ENCODE measurements at regions of chr1 and their contacts with region 1.

Region 1: DNA sequence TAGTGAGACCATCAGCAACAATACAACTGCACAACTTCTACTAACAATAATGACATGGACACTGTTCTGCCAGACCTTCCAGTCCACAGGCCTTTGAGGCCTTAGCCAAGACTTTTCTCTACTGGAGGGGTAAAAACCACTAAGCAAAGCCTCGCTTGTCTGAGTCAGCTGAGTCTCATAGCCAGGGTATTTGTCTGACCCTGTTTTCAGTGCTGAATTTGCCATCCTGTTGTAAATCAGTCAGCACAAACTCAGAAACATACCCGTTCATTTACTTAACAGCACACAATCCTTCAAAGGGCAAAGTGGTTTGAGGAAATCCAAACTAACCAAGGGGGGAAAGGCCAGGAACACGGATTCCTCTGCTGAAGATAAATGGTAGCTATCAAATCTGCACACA is 537.8 kb downstream of the SMYD3 start:
- DNase-seq: no peak
- H3K4me3 ChIP-seq: no peak overlapping the region
- H3K27ac ChIP-seq: no peak overlapping the region
- H3K4me1 ChIP-seq: no peaks in the 10 kb centered on the region
- H3K27me3 ChIP-seq: no peaks in the 10 kb centered on the region
- CTCF ChIP-seq: no peak

Region 2: GRCh38 chr1:245797592-245798348 is 171.5 kb before region 1 on chr1:
- CTCF ChIA-PET with region 1: interaction called, 14 read pairs
- POLR2A ChIA-PET with region 1: no interaction called
- intact Hi-C with region 1: no loop called
- DNase-seq: no peak
- H3K4me3 ChIP-seq: no peak overlapping the region
- H3K27ac ChIP-seq: no peak overlapping the region
- H3K4me1 ChIP-seq: no peaks in the 10 kb centered on the region
- H3K27me3 ChIP-seq: no peaks in the 10 kb centered on the region
- CTCF ChIP-seq: peak; percentile 54

Region 3: DNA sequence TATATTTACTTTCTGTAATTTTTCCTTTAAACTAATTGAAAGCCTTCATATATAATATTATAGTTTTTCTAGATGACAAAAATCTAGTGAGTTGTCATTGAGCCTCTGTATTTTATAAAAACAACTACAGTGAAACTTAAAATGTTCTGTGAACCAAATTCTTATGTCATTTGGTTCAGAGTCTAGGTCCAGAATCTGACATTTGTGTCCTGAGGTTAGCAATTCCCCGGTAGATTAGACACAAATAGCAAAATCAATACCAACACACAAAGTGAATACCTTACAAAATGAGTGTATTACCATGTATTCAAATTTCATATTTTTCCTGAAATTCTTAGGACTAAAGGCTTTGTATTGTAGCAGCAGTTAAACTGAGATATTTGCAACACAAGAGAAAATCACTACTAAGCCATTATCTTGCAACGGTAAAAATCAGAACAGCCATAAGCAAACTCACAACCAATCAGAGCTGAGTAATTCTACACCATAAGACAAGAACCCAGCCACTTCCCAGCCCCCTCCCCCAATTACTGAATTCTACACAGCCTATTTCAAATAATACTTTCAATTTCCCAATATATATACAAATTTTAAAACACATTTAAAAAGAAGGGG is 35.7 kb before region 1 on chr1:
- CTCF ChIA-PET with region 1: no interaction called
- POLR2A ChIA-PET with region 1: no interaction called
- intact Hi-C with region 1: no loop called
- DNase-seq: no peak
- H3K4me3 ChIP-seq: no peak overlapping the region
- H3K27ac ChIP-seq: no peak overlapping the region
- H3K4me1 ChIP-seq: no peaks in the 10 kb centered on the region
- H3K27me3 ChIP-seq: no peaks in the 10 kb centered on the region
- CTCF ChIP-seq: no peak

Measured in PC-9 (cell line).